Activated naive CD4-positive, alpha-beta T cell treated with anti-CD3 and anti-CD28 coated beads, Interleukin-2, amount 10 ng/mL, durations not matched to agents 7 days and 5 days (primary cell): ENCODE measurements at regions of chr11 and their contacts with region 1.

Region 1: GRCh38 chr11:9015677-9016076 is 11.9 kb upstream of the NRIP3 start:
- DNase-seq: peak; percentile 73
- H3K4me3 Mint-ChIP-seq: no peak overlapping the region
- H3K27ac Mint-ChIP-seq: no peak overlapping the region
- H3K4me1 Mint-ChIP-seq: peaks cover 24% of the 10 kb centered on the region
- H3K27me3 Mint-ChIP-seq: peaks cover 10% of the 10 kb centered on the region

Region 2: GRCh38 chr11:9030601-9031000 is 14.9 kb after region 1 on chr11:
- CTCF ChIA-PET with region 1: interaction called, 16 read pairs
- DNase-seq: no peak
- H3K4me3 Mint-ChIP-seq: no peak overlapping the region
- H3K27ac Mint-ChIP-seq: no peak overlapping the region
- H3K4me1 Mint-ChIP-seq: no peaks in the 10 kb centered on the region
- H3K27me3 Mint-ChIP-seq: peaks cover 15% of the 10 kb centered on the region

Region 3: DNA sequence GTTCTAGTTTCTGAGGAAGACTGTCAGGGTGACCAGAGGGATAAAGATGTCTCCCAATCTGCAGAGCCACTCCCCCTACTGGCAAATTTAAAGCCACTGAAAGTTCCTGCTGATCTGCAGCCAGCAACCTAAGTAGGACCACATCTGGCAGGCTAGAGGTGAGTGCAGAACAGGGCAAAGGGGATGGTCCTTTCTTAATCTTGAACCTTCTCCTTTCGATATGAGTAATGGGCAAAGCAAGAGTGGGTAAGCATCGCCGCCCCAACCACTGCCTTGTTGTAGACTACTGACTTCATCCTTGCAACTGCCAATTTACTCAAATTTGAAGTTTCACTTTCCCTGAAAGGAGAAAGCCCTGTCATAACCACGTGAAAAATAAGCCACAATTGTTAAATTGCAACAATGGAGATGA is 45.0 kb after region 1 on chr11:
- CTCF ChIA-PET with region 1: interaction called, 15 read pairs
- DNase-seq: peak; percentile 62
- H3K4me3 Mint-ChIP-seq: no peak overlapping the region
- H3K27ac Mint-ChIP-seq: no peak overlapping the region
- H3K4me1 Mint-ChIP-seq: peaks cover 13% of the 10 kb centered on the region
- H3K27me3 Mint-ChIP-seq: peaks cover 27% of the 10 kb centered on the region

Region 4: DNA sequence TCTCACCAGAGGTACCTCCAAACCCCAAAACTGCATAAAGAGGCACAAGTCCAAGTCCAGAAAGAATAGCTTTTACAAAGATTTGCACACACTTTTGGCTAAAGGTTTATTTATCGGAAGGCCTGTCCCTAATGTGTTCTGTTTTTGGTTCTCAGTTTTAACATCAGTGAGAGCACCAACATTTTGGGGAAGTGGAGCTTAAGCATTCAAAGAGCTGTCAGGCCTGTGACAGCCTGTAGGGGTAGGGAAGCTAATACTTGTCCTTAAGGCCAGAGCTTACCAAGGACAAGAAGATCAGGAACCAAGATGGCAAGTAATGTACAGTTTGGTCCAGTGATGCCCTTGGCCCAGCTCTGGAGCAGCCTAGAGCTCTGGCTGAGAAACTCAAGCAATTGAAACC is 114.6 kb after region 1 on chr11:
- CTCF ChIA-PET with region 1: interaction called, 158 read pairs
- DNase-seq: no peak
- H3K4me3 Mint-ChIP-seq: no peak overlapping the region
- H3K27ac Mint-ChIP-seq: no peak overlapping the region
- H3K4me1 Mint-ChIP-seq: peaks cover 11% of the 10 kb centered on the region
- H3K27me3 Mint-ChIP-seq: no peaks in the 10 kb centered on the region

Region 5: DNA sequence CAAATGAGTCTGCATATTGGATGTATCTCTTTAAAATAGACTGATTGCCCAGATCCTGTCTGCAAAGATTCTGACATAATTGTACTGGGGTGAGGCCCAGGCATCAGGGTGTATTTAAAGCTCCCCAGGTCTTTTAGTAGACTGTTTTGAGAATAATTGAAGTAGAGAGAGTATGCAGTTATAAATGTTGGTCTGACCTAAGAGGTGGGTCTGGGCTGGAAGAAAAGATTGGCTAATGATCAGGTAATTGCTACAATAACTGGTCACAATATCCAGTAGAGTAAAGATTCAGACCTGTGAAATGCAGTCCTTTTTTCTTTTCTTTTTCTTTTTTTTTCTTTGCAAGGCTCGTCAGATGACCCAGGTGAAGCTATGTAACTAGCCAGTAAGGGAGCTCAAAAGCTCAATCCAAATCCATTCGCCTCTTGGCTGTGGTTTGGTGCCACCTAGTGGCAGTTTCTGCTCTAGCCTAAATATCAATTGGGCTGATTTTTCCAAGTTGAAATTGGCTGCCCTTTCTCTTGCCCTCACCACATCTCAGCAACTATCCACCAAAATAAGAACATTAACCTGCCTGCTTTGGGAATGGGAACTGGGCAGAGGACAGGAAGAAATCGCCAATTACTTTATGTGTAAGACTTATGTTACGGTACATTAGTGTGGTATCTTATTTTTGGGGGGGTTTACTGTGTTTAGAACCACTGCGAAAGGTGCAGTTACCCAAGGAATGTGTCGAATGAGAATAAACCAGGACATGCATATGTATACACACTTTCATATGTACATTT is 491.0 kb after region 1 on chr11:
- CTCF ChIA-PET with region 1: interaction called, 40 read pairs
- DNase-seq: peak; percentile 84
- H3K4me3 Mint-ChIP-seq: no peak overlapping the region
- H3K27ac Mint-ChIP-seq: peak overlapping the region; percentile 52
- H3K4me1 Mint-ChIP-seq: peaks cover 11% of the 10 kb centered on the region
- H3K27me3 Mint-ChIP-seq: no peaks in the 10 kb centered on the region